ENCODE measurements at regions of chr1 and their contacts with region 1.

Region 1: DNA sequence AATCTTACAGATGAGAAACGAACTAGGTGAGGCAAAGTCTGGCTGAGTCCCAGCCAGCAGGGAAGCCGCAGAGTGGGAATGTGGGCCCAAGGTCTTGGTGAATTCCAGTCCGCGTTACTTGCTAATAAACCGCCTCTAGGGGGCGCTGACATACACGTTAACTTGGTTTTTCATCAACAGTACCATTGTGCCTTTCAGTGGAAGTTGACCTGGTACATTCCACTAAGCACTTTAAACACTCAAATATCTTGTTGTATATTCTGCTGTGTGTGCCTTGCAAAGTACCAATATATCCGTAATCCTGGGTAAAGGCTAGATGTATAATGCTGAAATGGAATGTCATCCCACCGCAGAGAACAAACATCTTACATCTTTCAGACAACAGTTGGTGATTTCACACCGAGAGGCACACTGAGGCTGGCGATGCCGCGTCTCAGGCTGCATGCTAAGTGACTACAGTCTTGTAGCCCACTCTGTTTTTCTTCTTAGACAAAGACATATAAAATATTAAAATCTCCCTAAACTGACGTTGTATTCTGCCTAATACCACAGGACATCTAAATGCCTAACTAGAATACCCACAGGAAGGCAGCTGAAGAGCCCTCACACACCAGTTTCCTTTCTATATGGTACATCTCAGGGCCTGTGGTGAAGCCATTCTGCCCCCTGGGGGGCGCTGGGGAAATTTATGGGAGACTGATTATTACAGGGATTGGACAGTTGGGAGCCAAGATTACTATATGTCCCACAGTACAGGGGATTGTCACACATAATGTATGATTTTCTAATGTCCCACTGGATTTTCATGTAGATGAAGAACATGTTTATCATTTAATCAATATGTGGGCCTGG is 49.2 kb upstream of the C1orf198 start:
- DNase-seq: peak; percentile 41
- H3K4me3 Mint-ChIP-seq: no peak overlapping the region
- H3K27ac Mint-ChIP-seq: no peak overlapping the region
- H3K4me1 Mint-ChIP-seq: no peaks in the 10 kb centered on the region
- H3K27me3 Mint-ChIP-seq: no peaks in the 10 kb centered on the region

Region 2: GRCh38 chr1:231091831-231092301 is 174.4 kb after region 1 on chr1:
- intact Hi-C with region 1: loop called (anchors 10 kb)
- DNase-seq: no peak
- H3K4me3 Mint-ChIP-seq: no peak overlapping the region
- H3K27ac Mint-ChIP-seq: no peak overlapping the region
- H3K4me1 Mint-ChIP-seq: peaks cover 2% of the 10 kb centered on the region
- H3K27me3 Mint-ChIP-seq: peaks cover 23% of the 10 kb centered on the region

Region 3: GRCh38 chr1:231192620-231193163 is 275.2 kb after region 1 on chr1:
- intact Hi-C with region 1: no loop called
- DNase-seq: no peak
- H3K4me3 Mint-ChIP-seq: no peak overlapping the region
- H3K27ac Mint-ChIP-seq: no peak overlapping the region
- H3K4me1 Mint-ChIP-seq: no peaks in the 10 kb centered on the region
- H3K27me3 Mint-ChIP-seq: peaks cover 7% of the 10 kb centered on the region

Region 4: GRCh38 chr1:231211005-231211857 is 293.7 kb after region 1 on chr1:
- intact Hi-C with region 1: loop called (anchors 1 kb)
- DNase-seq: peak; percentile 81
- H3K4me3 Mint-ChIP-seq: peak overlapping the region; percentile 80
- H3K27ac Mint-ChIP-seq: no peak overlapping the region
- H3K4me1 Mint-ChIP-seq: peaks cover 10% of the 10 kb centered on the region
- H3K27me3 Mint-ChIP-seq: peaks cover 3% of the 10 kb centered on the region